ENCODE measurements at regions of chr7 and their contacts with region 1.

Region 1: DNA sequence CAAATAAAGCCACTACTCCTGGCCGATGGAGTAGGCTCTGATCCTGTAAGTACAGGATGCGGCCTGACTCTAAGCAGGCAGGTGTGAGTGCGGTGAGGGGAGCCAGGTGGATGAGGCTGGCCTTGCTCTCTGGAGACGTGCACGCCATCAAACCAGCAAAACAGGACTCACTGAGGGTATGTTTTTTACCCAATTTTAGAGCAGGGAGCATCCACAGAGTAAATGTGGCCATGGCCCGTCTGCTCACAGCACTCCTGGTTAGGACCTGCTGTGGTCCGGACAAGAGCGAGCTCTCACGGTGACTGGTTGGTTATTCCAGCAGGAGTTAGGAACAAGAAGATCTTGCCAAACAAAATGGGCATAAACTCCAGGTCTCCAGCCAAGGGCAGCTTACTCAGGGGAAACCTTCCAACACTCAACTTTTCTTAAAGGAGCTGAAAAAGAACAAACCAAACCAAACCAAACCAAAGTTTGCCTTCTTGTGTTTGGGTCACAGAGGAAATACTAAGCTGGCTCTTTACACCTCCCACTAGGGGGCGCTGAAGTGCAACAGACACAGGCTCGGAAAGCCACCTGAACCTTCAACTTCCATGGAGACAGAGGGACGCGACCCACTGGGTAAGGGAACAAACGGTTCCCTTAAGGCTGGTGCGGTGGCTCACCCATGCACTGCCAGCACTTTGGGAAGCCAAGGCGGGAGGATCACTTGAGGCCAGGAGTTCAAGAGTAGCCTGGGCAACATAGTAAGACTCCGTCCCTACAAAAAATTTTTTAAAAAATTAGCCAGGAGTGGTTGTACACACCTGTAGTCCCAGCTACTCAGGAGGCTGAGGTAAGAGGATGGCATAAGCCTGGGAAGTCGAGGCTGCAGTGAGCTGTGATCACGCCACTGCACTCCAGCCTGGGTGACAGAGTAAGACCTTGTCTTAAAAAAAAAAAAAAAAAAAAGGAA is 122.4 kb downstream of the CLEC2L start:
- DNase-seq: peak; percentile 67
- CTCF ChIP-seq: peak; percentile 94

Region 2: DNA sequence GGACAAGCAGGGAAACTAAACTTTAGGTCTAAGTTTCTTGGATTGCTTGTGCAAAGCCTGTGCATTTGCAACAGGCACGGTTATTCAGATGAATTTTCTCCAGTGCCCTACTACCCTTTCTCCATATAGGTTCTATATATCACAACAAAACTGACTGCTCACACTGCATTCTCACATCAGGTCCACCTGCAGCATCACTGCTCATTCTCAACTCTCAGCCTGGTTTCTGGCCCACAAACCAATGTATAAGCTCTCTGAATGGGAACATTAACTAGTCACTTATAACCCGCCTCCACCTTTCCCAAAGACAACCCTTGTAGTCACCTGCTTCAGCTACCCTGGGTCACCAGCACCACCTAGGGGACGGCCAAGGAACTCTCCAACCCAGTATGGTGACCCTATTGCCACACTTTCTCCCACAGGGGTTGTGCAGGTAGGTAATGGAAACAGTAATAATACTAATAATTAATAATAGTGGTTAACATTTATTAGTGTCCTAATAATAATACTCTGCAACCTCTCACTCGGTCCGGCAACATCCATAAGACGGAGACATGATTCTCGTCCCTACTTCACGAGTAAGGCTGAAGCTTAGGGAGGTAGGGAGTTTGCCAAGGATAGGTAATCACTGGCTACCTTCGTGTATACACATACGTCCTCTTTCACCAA is 25.0 kb before region 1 on chr7:
- CTCF ChIA-PET with region 1: interaction called, 15 read pairs
- POLR2A ChIA-PET with region 1: no interaction called
- DNase-seq: peak; percentile 60
- CTCF ChIP-seq: peak; percentile 52

Region 3: DNA sequence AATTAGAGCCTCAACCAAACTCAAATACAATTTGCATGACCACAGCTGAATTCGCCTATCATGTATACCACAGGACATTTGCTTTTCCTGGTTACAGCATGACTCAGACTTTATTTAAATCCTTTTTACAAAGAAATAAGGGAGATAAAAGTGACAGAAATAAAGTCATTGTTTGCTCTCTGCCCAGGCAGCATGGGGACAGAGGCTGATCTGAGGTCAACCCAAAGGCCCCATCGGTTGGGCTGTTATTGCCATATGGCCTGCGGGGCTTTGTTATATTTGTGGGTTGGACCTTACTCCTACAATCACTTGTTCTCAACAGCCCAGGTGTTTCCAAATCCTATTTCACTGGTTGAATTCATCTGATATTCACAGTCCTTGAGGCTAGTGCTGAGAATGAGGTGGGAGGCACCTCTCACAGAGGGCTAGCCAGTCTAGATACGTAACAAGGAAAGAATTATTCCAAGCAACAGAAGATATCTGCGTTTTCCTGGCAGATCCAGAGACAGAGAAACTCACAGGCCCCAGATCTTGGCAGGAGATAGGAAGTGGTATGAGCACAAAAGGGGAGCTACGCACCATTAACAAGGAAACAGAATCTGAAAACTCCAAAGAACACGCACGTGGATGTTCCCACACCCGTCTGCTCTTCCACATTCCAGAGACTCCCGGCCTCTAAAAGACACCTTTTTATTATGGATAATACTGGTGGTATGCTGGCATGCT is 14.6 kb after region 1 on chr7:
- CTCF ChIA-PET with region 1: interaction called, 42 read pairs
- POLR2A ChIA-PET with region 1: interaction called, 3 read pairs
- DNase-seq: no peak
- CTCF ChIP-seq: no peak

Region 4: GRCh38 chr7:139682136-139683013 is 36.5 kb after region 1 on chr7:
- CTCF ChIA-PET with region 1: interaction called, 33 read pairs
- POLR2A ChIA-PET with region 1: interaction called, 4 read pairs
- DNase-seq: no peak
- CTCF ChIP-seq: no peak

Region 5: GRCh38 chr7:139725077-139725476 is 79.2 kb after region 1 on chr7:
- CTCF ChIA-PET with region 1: interaction called, 11 read pairs
- POLR2A ChIA-PET with region 1: interaction called, 6 read pairs
- DNase-seq: peak; percentile 46
- CTCF ChIP-seq: no peak

Region 6: DNA sequence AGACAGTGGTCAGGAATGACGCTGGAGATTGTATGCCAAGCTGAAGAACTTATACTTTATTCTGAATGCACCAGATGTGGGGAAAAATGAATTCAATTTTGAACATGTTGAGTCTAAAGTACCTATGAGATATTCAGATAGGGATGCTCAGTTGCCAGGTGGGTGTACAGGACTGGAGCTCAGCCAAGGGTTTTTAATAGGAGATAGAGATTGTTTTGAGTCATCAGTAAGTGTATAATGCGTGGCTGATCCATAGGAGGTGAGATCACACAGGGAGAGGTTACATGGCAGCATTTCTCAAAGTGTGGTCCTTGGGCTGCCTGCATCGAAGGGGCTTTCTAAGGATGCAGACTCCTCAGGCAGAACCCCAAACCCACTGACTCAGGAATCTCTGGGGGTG is 138.8 kb after region 1 on chr7:
- CTCF ChIA-PET with region 1: interaction called, 35 read pairs
- POLR2A ChIA-PET with region 1: no interaction called
- DNase-seq: no peak
- CTCF ChIP-seq: no peak